MCF 10A (cell line): ENCODE measurements at regions of chr10 and their contacts with region 1.

Region 1: GRCh38 chr10:24465891-24466818 is 257.2 kb downstream of the KIAA1217 start:
- DNase-seq: peak; percentile 95
- H3K4me3 Mint-ChIP-seq: peak overlapping the region; percentile 76
- H3K27ac Mint-ChIP-seq: peak overlapping the region; percentile 90
- H3K4me1 Mint-ChIP-seq: peaks cover 48% of the 10 kb centered on the region
- H3K27me3 Mint-ChIP-seq: no peaks in the 10 kb centered on the region
- CTCF ChIP-seq: no peak

Region 2: GRCh38 chr10:24114556-24114955 is 351.6 kb before region 1 on chr10:
- CTCF ChIA-PET with region 1: no interaction called
- POLR2A ChIA-PET with region 1: no interaction called
- intact Hi-C with region 1: no loop called
- DNase-seq: no peak
- H3K4me3 Mint-ChIP-seq: no peak overlapping the region
- H3K27ac Mint-ChIP-seq: no peak overlapping the region
- H3K4me1 Mint-ChIP-seq: no peaks in the 10 kb centered on the region
- H3K27me3 Mint-ChIP-seq: peaks cover 19% of the 10 kb centered on the region
- CTCF ChIP-seq: no peak

Region 3: GRCh38 chr10:24255881-24256311 is 210.3 kb before region 1 on chr10:
- CTCF ChIA-PET with region 1: no interaction called
- POLR2A ChIA-PET with region 1: interaction called, 14 read pairs
- intact Hi-C with region 1: loop called (anchors 5 kb)
- DNase-seq: peak; percentile 93
- H3K4me3 Mint-ChIP-seq: peak overlapping the region; percentile 84
- H3K27ac Mint-ChIP-seq: peak overlapping the region; percentile 97
- H3K4me1 Mint-ChIP-seq: peaks cover 42% of the 10 kb centered on the region
- H3K27me3 Mint-ChIP-seq: no peaks in the 10 kb centered on the region
- CTCF ChIP-seq: no peak

Region 4: GRCh38 chr10:24360282-24361127 is 105.7 kb before region 1 on chr10:
- CTCF ChIA-PET with region 1: no interaction called
- POLR2A ChIA-PET with region 1: no interaction called
- intact Hi-C with region 1: loop called (anchors 5 kb)
- DNase-seq: peak; percentile 87
- H3K4me3 Mint-ChIP-seq: no peak overlapping the region
- H3K27ac Mint-ChIP-seq: no peak overlapping the region
- H3K4me1 Mint-ChIP-seq: peaks cover 6% of the 10 kb centered on the region
- H3K27me3 Mint-ChIP-seq: no peaks in the 10 kb centered on the region
- CTCF ChIP-seq: peak; percentile 71

Region 5: DNA sequence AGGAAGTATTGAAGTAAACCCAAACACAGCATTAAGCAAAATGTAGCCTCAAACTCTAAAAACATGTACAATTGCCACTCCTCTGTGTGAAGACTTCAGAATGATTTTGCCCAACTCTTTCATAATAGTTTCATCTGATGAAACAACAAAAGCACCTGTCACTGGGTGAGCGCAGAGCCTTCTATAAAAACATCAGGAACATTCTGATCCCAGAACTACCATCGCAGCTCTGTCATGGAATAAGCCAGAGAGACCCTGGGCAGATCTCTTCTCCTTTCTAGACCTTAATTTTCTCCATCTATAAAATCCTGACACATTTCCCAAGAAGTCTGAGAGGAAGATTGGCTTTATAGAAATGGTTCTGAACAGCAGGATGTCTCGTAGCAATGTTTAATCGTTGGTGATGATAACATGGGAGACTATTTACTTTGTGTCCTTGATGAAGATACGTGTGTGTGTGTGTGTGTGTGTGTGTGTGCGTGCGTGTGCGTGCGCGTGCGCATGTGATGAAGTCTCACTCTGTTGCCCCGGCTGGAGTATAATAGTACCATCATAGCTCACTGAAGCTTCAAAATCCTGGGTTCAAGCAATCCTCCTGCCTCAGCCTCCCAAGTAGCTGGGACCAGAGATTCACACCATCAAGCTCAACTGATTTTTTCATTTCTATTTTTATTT is 59.2 kb before region 1 on chr10:
- CTCF ChIA-PET with region 1: no interaction called
- POLR2A ChIA-PET with region 1: interaction called, 27 read pairs
- intact Hi-C with region 1: no loop called
- DNase-seq: no peak
- H3K4me3 Mint-ChIP-seq: no peak overlapping the region
- H3K27ac Mint-ChIP-seq: peak overlapping the region; percentile 73
- H3K4me1 Mint-ChIP-seq: peaks cover 24% of the 10 kb centered on the region
- H3K27me3 Mint-ChIP-seq: no peaks in the 10 kb centered on the region
- CTCF ChIP-seq: no peak

Region 6: GRCh38 chr10:24428410-24428782 is 37.8 kb before region 1 on chr10:
- CTCF ChIA-PET with region 1: no interaction called
- POLR2A ChIA-PET with region 1: interaction called, 4 read pairs
- intact Hi-C with region 1: loop called (anchors 1 kb)
- DNase-seq: peak; percentile 63
- H3K4me3 Mint-ChIP-seq: no peak overlapping the region
- H3K27ac Mint-ChIP-seq: peak overlapping the region; percentile 70
- H3K4me1 Mint-ChIP-seq: peaks cover 10% of the 10 kb centered on the region
- H3K27me3 Mint-ChIP-seq: no peaks in the 10 kb centered on the region
- CTCF ChIP-seq: no peak

Region 7: GRCh38 chr10:24449321-24449740 is 16.8 kb before region 1 on chr10:
- CTCF ChIA-PET with region 1: interaction called, 4 read pairs
- POLR2A ChIA-PET with region 1: interaction called, 78 read pairs
- intact Hi-C with region 1: no loop called
- DNase-seq: no peak
- H3K4me3 Mint-ChIP-seq: no peak overlapping the region
- H3K27ac Mint-ChIP-seq: no peak overlapping the region
- H3K4me1 Mint-ChIP-seq: peaks cover 19% of the 10 kb centered on the region
- H3K27me3 Mint-ChIP-seq: no peaks in the 10 kb centered on the region
- CTCF ChIP-seq: no peak

Region 8: GRCh38 chr10:24488631-24489030 is 22.5 kb after region 1 on chr10:
- CTCF ChIA-PET with region 1: interaction called, 4 read pairs
- POLR2A ChIA-PET with region 1: interaction called, 230 read pairs
- intact Hi-C with region 1: loop called (anchors 1 kb)
- DNase-seq: no peak
- H3K4me3 Mint-ChIP-seq: no peak overlapping the region
- H3K27ac Mint-ChIP-seq: no peak overlapping the region
- H3K4me1 Mint-ChIP-seq: peaks cover 35% of the 10 kb centered on the region
- H3K27me3 Mint-ChIP-seq: no peaks in the 10 kb centered on the region
- CTCF ChIP-seq: no peak

Region 9: GRCh38 chr10:24882047-24882698 is 416.0 kb after region 1 on chr10:
- CTCF ChIA-PET with region 1: no interaction called
- POLR2A ChIA-PET with region 1: no interaction called
- intact Hi-C with region 1: no loop called
- DNase-seq: peak; percentile 43
- H3K4me3 Mint-ChIP-seq: no peak overlapping the region
- H3K27ac Mint-ChIP-seq: no peak overlapping the region
- H3K4me1 Mint-ChIP-seq: peaks cover 6% of the 10 kb centered on the region
- H3K27me3 Mint-ChIP-seq: no peaks in the 10 kb centered on the region
- CTCF ChIP-seq: no peak